ENCODE measurements at regions of chr10 and their contacts with region 1.

Region 1: DNA sequence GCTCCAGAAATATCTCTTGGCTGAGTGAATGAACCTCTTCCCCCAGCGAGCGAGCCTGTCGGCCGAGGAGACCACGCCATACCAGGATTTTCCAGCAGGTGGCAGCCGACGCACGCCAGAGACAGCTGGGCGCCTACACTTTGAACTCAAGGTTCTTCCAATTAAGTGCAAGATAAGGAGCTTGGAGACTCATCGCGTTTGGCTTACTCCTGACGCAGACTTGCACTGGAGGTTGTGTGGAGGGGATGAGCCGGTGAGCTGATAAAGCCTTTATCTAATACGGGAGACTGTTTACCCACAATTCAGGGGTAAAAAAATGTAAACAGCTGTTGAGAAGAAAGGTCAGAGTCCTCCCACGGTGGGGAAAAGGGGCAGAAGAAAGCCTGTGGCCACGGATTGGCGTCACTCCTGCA is 45.9 kb upstream of the EMX2 start:
- DNase-seq: peak; percentile 40
- H3K4me3 ChIP-seq: no peak overlapping the region
- CTCF ChIP-seq: peak; percentile 88

Region 2: GRCh38 chr10:117226824-117227451 is 269.7 kb before region 1 on chr10:
- CTCF ChIA-PET with region 1: no interaction called
- POLR2A ChIA-PET with region 1: no interaction called
- DNase-seq: no peak
- H3K4me3 ChIP-seq: no peak overlapping the region
- CTCF ChIP-seq: peak; percentile 34

Region 3: DNA sequence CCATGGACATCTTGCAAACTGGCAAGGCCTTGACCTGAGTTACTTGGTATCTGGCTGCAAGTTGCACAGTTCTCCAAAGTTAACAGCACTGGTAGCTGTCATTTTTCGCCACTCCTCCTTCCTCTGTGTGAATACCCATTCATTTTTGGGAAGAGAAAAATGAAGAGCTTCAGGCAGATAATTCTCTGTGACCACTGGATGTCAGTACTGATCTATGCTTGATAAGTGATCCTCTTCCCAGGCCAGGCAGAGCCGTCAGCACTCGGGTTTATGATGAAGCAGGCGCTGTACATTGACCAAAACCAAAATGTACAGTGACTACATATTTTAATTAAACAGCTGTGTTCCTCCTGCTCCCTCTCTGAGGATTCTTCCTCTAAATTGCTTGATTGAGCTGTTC is 65.5 kb before region 1 on chr10:
- CTCF ChIA-PET with region 1: interaction called, 61 read pairs
- POLR2A ChIA-PET with region 1: no interaction called
- DNase-seq: peak; percentile 17
- H3K4me3 ChIP-seq: no peak overlapping the region
- CTCF ChIP-seq: peak; percentile 54

Region 4: GRCh38 chr10:117461766-117462423 is 34.7 kb before region 1 on chr10:
- CTCF ChIA-PET with region 1: interaction called, 12 read pairs
- POLR2A ChIA-PET with region 1: no interaction called
- DNase-seq: peak; percentile 96
- H3K4me3 ChIP-seq: no peak overlapping the region
- CTCF ChIP-seq: no peak

Region 5: DNA sequence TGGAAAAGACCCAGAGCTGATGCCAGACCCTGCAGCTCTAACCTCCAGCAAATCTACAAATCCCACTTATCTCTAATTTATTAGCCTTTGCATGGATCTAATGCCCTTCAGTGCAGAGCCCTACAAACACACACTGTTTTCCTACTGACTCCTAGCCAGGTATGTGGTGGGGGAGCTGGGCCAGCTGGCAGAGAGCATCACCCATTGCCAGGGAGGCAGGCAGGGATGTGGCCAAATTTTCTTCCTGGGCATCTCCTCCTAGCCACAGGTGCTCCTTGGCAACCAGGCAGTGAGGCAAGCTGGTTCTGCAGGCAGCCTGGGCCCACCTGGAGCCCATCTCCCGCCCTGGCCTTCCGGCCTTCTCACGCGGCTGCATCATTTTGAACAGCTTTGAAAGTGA is 10.0 kb before region 1 on chr10:
- CTCF ChIA-PET with region 1: interaction called, 22 read pairs
- POLR2A ChIA-PET with region 1: no interaction called
- DNase-seq: no peak
- H3K4me3 ChIP-seq: no peak overlapping the region
- CTCF ChIP-seq: no peak

Region 6: DNA sequence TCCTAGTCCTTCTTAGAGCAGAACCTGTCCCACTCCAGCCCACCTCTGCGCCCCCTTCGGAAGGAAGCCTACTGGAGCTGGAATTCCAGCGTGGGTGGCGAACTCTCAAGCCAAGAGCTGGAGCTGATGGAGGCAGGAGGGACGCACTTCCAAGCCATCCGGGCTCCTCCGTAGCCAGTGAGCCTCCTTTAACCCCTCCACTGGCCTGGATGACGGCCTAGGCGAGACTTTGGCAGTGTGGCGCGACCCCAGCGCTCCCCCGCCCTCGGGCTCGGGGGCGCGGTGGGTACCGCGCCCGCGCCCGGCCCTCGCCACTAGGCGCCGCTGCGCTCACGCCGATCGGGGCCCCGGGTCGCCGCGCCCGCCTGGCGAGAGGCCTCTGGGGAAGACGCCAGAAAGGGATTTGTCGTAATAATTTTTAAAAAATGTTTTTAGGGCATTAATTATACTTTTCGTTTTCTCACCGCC is 40.8 kb after region 1 on chr10:
- CTCF ChIA-PET with region 1: interaction called, 28 read pairs
- POLR2A ChIA-PET with region 1: interaction called, 5 read pairs
- DNase-seq: no peak
- H3K4me3 ChIP-seq: peak overlapping the region; percentile 38
- CTCF ChIP-seq: peak; percentile 47

Region 7: GRCh38 chr10:117677890-117678500 is 181.4 kb after region 1 on chr10:
- CTCF ChIA-PET with region 1: no interaction called
- POLR2A ChIA-PET with region 1: no interaction called
- DNase-seq: no peak
- H3K4me3 ChIP-seq: no peak overlapping the region
- CTCF ChIP-seq: no peak

Region 8: DNA sequence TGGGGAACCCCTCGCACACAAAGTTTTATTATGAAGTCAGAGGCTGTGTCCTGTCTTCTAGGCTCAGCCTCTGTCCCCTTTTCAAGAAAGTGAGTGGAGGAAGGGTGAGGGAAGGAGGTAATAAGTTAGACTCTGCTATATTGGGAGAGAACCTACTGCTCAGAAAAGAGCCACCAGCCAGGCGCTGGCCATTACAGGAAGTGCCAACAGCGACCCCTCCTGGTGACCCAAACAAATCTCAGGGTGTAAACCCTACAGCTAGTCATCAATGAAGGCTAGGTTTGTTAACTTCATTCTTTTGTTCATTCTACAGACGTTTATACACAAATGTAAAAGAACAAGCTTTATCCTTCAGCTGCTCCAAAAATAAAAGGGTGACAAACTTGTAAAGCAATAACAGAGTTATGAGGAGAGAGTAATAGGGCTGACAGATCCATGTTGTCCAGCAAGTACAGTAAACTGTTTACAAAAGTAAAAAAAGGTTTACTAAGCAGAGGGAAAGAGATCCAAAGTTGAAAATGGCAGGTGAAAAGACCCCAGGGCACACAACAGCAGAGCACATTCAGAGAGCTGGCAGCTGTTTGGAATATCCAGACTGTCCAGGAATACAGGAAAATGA is 762.8 kb after region 1 on chr10:
- CTCF ChIA-PET with region 1: interaction called, 15 read pairs
- POLR2A ChIA-PET with region 1: no interaction called
- DNase-seq: no peak
- H3K4me3 ChIP-seq: no peak overlapping the region
- CTCF ChIP-seq: peak; percentile 57

Region 9: GRCh38 chr10:118459726-118460193 is 963.1 kb after region 1 on chr10:
- CTCF ChIA-PET with region 1: interaction called, 52 read pairs
- POLR2A ChIA-PET with region 1: no interaction called
- DNase-seq: peak; percentile 4
- H3K4me3 ChIP-seq: no peak overlapping the region
- CTCF ChIP-seq: peak; percentile 72